Right cardiac atrium (tissue), 5 donors: ENCODE measurements at regions of chr22 and their contacts with region 1.

Region 1: DNA sequence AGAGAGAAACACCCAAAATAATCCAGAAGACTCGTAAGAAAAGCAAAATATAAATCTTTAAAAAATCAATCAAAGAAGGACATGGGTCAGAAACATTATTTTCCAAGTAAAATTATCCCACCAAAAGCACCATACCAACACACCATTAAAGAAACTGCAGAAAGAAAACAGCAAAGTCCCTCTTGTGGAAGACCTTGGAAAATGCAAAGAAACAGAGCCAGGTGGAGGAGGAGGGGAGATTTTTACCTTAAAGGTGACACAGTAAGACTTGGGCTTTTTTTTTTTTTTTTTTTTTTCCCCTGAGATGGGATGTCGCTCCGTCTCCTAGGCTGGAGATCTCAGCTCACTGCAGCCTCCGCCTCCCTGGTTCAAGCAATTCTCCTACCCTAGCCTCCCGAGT is 123.8 kb downstream of the LARGE1 start:
- DNase-seq: no peak
- ATAC-seq: no peak
- H3K4me3 ChIP-seq: no peak overlapping the region
- H3K27ac ChIP-seq: no peak overlapping the region
- H3K4me1 ChIP-seq: peaks cover 13% of the 10 kb centered on the region
- H3K27me3 ChIP-seq: no peaks in the 10 kb centered on the region

Region 2: GRCh38 chr22:33853200-33854097 is 57.0 kb after region 1 on chr22:
- intact Hi-C with region 1: loop called in 1 of 4 experiments (anchors 10 kb)
- DNase-seq: peak; percentile 69 to 89 (median 85)
- ATAC-seq: peak; percentile 93 to 95
- H3K4me3 ChIP-seq: peak overlapping the region; percentile 87
- H3K27ac ChIP-seq: peak overlapping the region; percentile 64
- H3K4me1 ChIP-seq: peaks cover 13% of the 10 kb centered on the region
- H3K27me3 ChIP-seq: no peaks in the 10 kb centered on the region